ENCODE measurements at regions of chr15 and their contacts with region 1.

Region 1: DNA sequence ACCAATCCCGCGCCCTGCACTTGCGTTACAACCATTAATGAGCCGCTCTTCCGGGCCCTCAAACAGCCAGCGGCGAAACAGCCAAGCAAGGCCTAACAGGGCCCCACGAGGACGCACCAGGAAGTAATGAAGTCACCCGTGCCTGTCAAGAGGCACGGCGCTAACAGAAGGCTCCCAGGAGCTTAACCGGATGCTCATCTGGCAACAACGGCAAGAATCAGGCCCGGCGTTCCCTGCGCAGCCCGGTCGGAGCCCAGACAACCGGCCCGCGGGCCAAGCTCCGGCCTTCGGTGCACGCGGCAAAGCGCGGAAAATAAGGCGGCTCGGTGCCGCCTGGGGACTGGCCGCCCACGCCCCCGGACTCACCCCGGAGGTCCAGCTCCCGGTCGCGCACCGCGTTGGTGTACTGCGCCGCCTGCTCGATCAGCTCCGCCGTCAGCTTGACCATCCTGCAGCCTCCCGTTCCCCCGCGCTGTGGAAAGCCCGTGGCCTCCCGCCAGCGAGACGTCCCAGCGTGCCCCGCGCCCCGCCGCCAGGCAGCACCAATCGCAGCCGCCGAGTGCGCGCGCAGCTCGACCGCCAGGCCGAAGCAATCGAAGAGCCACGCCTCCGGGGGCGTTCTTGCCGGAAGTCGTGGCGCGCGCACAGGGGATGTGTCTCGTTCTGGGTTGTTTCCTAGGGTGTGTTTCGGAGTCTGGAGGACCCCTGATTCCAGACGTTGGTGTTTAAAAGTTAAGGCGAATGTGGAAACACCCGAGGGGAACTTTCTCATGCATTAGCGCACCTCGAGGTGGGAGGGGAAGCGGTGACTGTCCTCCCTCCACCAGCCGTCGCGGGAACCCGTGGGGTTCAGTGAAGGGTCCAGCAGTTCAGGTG is at the start of gene SNRPA1:
- H3K4me3 Mint-ChIP-seq: peak within 1 kb of the TSS; percentile 85
- H3K27ac Mint-ChIP-seq: peak within 1 kb of the TSS; percentile 83
- H3K4me1 Mint-ChIP-seq: peaks cover 14% of the 10 kb centered on the region
- H3K27me3 Mint-ChIP-seq: no peaks in the 10 kb centered on the region

Region 2: DNA sequence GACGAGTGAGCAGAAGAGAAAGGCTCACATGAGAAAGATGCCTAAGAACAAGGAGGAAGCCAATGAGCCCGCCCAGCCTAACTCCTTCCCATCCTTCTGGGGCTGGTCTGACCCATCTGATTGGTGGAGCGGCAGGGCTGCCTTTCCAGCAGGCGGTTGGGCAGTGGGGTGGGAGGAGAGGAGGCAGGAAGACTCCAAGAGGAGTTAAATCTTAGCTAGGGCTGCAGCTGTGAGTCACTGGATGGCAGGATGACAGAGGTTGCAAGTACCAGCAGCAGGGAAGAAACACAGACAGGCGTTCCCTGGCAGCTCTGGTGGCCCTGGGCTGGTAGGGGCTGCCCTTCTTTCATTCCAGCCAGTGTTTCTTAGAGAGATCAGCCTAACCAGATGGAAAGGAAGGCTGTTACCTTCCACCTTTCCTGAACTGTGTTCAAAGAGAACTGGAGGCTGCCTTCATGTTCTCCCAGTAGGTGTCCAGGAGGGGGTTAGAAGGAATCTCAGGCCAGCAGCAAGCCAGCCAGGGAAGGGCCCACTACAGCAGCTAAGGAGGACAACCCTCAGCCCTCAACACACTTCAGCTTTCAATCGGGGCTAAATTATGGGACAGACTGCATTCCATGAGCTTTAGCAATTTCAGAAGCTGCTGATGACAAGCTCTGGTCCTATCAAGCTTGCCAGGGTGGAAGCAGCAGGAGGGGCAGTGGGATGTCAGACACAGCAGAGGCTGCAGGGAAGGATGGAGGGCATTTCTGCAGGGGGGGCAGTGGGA is 93.4 kb before region 1 on chr15:
- intact Hi-C with region 1: no loop called
- H3K4me3 Mint-ChIP-seq: no peak overlapping the region
- H3K27ac Mint-ChIP-seq: peak overlapping the region; percentile 73
- H3K4me1 Mint-ChIP-seq: peaks cover 80% of the 10 kb centered on the region
- H3K27me3 Mint-ChIP-seq: no peaks in the 10 kb centered on the region

Region 3: DNA sequence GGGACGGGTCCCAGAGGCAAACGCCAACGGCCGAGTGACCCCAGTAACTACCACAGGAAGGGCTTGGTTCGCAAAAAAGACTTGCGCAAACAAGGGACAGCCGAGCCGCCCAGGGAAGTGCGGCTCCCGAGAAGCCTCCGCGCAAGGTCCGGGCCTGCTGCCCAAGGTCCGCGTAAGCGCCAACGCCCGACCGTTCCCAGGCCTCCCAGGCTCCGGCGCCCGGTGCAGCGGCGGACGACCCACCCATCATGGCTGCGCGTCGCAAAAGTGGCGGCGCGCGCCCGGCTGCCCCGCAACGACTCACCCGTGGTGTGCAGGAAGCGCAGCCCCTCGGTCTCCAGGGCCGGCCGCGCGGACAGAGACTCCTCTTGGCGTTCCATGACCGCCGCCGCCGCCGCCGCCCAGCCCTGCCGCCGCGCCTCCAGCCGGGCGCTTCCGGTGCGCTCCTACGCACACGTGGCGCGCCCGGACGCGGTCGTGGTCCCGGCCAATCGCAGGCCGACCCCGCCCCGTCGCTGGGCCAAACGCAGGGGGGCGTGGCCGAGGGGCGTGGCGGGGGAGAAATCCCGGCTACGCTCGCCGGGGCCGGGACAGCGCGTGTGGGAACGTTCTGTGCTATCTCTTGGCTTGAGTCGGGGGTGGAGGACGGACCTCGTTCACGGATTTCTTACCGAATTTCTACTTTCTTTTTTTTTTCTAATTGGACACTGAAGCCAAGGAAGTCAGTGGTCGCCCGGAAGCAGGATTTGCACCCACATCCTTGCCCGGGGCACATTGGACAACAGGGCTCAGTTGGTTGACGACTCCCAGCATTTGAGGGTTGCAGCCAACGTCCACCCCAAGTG is 17.7 kb before region 1 on chr15 and contains the start of gene SELENOS:
- intact Hi-C with region 1: loop called (anchors 2 kb)
- H3K4me3 Mint-ChIP-seq: peak within 1 kb of the TSS; percentile 97
- H3K27ac Mint-ChIP-seq: peak within 1 kb of the TSS; percentile 89
- H3K4me1 Mint-ChIP-seq: peaks cover 14% of the 10 kb centered on the region
- H3K27me3 Mint-ChIP-seq: no peaks in the 10 kb centered on the region

Region 4: DNA sequence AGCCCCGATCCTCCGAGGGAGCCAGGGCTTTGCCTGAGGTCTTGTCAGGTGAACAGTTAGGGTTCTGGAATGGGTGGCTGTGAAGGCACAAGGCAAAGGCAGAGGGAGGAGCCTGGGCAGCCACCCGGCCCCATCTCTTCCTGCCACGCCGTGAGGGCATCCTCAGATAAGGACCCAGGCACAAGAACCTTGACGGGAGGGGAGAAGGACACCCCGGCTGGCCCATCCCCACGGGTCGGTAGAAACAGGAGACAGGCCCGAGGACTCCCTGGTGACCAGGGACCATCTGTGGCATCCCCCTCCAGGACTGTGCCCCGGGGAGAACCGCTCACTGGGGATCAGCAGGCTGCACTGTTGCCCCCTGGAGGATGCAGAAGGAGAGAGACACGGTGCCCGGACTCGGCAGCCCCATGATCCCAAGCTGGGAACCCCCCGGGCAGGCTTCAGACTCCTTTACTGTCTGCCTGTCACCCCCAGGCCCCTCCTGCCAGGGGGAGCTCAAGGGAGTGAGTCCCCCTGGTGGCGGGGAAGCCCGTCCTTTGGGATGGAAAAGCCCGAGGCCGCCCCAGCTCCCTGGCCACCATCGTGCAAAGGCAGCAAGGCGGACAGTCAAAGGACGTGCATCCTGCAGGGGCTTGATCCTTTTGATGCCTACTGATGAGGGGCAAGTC is 206.9 kb after region 1 on chr15:
- intact Hi-C with region 1: loop called (anchors 2 kb)
- H3K4me3 Mint-ChIP-seq: no peak overlapping the region
- H3K27ac Mint-ChIP-seq: no peak overlapping the region
- H3K4me1 Mint-ChIP-seq: peaks cover 17% of the 10 kb centered on the region
- H3K27me3 Mint-ChIP-seq: peaks cover 65% of the 10 kb centered on the region

Region 5: GRCh38 chr15:101578437-101578894 is 283.5 kb after region 1 on chr15:
- intact Hi-C with region 1: no loop called
- H3K4me3 Mint-ChIP-seq: no peak overlapping the region
- H3K27ac Mint-ChIP-seq: no peak overlapping the region
- H3K4me1 Mint-ChIP-seq: no peaks in the 10 kb centered on the region
- H3K27me3 Mint-ChIP-seq: peaks cover 24% of the 10 kb centered on the region

Region 6: DNA sequence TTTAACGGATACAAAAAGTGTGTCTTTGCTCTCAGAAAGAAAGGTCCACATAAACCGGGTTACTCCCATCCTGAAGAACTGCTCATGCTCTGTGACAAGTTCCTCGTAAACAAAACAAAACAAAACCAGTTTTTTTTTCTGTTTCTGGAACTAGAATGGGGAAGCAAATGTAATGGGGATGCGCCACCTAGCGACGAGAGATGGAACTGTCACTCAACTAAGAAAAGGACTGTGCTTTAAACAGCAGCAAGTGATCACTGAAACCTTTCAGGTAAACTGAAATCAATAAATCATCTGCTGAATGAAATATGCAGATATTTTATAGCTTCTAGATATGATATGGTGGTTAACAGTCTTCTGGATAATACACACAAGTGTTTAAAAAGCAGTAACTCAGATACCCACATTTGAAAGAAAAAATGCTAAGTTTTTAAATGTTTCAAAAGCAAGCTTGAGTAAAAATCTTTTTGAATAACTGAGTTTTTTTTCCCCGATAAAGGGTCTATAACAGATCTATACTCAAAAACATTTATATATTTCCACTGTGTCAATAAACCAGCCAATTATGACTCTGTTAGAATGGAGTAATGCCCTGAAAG is 346.3 kb after region 1 on chr15:
- intact Hi-C with region 1: loop called (anchors 1 kb)
- H3K4me3 Mint-ChIP-seq: peak overlapping the region; percentile 47
- H3K27ac Mint-ChIP-seq: peak overlapping the region; percentile 89
- H3K4me1 Mint-ChIP-seq: peaks cover 33% of the 10 kb centered on the region
- H3K27me3 Mint-ChIP-seq: no peaks in the 10 kb centered on the region

Region 7: DNA sequence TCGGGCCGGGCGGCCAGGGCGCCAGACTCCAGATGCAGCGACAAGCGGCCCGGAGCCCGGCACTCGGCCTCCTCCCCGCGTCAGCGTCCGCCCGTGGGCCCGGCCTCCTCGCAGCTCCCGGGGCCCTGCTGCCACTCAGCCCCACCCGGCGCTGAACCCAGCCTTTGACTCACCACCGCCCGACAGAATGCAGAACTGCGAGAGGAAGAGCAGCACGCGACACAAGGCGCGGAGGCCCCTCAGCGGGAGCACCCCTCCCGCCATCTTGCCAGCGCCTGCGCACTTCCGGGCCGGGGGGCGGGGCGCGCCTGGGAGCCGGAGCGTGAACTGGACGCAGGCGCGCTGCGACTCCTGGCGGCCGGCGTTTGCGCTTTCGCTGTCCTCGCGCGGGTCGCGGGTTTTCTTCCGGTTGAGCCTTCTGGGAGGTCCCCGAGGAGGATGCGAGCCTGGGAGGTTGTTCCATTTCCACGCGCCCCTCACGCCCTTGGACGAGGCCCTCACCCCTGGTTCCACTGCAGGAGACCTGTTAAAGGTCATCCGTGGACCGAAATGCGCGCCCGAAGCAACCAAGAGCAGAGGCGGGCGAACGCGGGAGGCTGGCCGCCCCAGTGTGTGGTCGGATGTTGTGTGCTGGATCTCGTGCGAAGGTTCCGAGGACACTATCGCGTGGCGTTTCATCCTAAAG is 357.3 kb after region 1 on chr15 and contains the start of gene TM2D3:
- intact Hi-C with region 1: loop called (anchors 1 kb)
- H3K4me3 Mint-ChIP-seq: peak within 1 kb of the TSS; percentile 86
- H3K27ac Mint-ChIP-seq: peak within 1 kb of the TSS; percentile 91
- H3K4me1 Mint-ChIP-seq: peaks cover 26% of the 10 kb centered on the region
- H3K27me3 Mint-ChIP-seq: no peaks in the 10 kb centered on the region